ENCODE measurements at regions of chr4 and their contacts with region 1.

Region 1: GRCh38 chr4:120156120-120156718 is 89.6 kb upstream of the MAD2L1 start:
- DNase-seq: no peak

Region 2: GRCh38 chr4:120009722-120010121 is 146.5 kb before region 1 on chr4:
- intact Hi-C with region 1: no loop called
- DNase-seq: no peak

Region 3: GRCh38 chr4:120354381-120354780 is 198.2 kb after region 1 on chr4:
- intact Hi-C with region 1: no loop called
- DNase-seq: no peak

Region 4: GRCh38 chr4:120995266-120996010 is 839.2 kb after region 1 on chr4:
- intact Hi-C with region 1: no loop called
- DNase-seq: no peak

Region 5: GRCh38 chr4:121243485-121243884 is 1087.3 kb after region 1 on chr4:
- intact Hi-C with region 1: loop called (anchors 10 kb)
- DNase-seq: no peak